Endothelial cell of umbilical vein (primary cell): ENCODE measurements at regions of chr11 and their contacts with region 1.

Region 1: GRCh38 chr11:124900464-124900863 is 2.8 kb upstream of the ROBO4 start:
- DNase-seq: peak; percentile 75
- H3K4me3 ChIP-seq: peak overlapping the region in 1 of 3 experiments; percentile 41
- H3K27ac ChIP-seq: peak overlapping the region; percentile 95
- H3K4me1 ChIP-seq: peaks cover 51% of the 10 kb centered on the region
- H3K27me3 ChIP-seq: no peaks in the 10 kb centered on the region
- CTCF ChIP-seq: no peak
- POLR2A ChIP-seq: peak; percentile 67

Region 2: DNA sequence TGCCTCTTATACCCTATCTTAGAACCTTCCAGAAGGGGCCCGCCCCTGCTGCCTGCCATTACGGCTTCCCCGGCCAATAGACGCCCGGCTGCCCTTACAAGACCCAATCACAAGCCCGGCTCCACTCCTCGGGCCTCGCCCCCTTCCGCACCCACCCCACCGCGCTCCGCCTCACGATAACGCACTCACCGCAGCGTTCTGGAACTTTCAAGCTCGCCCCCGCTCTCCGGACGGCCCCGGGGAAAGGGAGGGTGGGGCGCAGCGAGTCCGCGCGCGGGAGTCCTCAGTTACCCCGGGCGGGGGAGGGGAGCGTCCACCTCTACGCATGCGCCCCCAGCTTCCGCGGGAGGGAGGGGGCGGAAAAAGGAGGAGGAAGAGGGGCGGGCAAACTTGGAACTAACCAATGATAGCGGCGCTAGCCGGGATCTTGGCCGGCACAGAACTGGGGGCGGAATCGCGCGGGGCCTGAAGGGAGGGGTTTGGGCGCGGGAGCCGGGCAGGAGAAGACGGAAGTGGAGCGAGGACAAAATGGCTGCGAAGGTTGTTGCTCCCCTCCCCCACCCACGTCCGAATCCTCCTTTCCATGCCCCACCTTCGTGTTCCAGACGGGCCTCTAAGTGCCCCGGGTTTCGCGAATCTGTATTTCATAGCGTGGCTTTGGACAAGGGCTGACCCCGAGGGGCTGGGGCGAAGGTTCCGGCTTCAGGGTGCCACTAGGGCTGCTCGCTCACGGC is 1838.1 kb before region 1 on chr11:
- CTCF ChIA-PET with region 1: no interaction called
- POLR2A ChIA-PET with region 1: no interaction called
- dilution Hi-C with region 1: no loop called
- intact Hi-C with region 1: loop called (anchors 5 kb)
- DNase-seq: peak; percentile 100
- H3K4me3 ChIP-seq: peak overlapping the region; percentile 66 to 95 (median 91)
- H3K27ac ChIP-seq: peak overlapping the region; percentile 96
- H3K4me1 ChIP-seq: peaks cover 29% of the 10 kb centered on the region
- H3K27me3 ChIP-seq: no peaks in the 10 kb centered on the region
- CTCF ChIP-seq: no peak
- POLR2A ChIP-seq: no peak

Region 3: DNA sequence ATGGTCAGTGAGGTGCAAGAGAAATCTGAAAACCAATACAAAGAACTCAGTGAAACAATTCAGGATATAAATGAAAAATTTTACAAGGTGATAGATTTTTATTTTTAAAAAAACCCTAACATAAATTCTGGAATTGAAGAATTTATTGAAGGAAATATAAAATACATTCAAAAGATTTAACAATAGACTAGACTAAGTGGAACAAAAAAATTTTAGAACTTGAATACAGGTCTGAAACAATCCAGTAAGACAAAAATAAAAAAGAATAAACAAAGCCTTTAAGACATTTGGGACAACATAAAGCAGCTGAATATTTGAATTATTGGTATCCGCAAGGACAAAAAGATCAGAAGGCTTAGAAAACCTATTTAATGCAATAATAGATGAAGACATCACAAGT is 218.0 kb before region 1 on chr11:
- CTCF ChIA-PET with region 1: no interaction called
- POLR2A ChIA-PET with region 1: no interaction called
- dilution Hi-C with region 1: no loop called
- intact Hi-C with region 1: no loop called
- DNase-seq: no peak
- H3K4me3 ChIP-seq: no peak overlapping the region
- H3K27ac ChIP-seq: no peak overlapping the region
- H3K4me1 ChIP-seq: no peaks in the 10 kb centered on the region
- H3K27me3 ChIP-seq: no peaks in the 10 kb centered on the region
- CTCF ChIP-seq: no peak
- POLR2A ChIP-seq: no peak

Region 4: DNA sequence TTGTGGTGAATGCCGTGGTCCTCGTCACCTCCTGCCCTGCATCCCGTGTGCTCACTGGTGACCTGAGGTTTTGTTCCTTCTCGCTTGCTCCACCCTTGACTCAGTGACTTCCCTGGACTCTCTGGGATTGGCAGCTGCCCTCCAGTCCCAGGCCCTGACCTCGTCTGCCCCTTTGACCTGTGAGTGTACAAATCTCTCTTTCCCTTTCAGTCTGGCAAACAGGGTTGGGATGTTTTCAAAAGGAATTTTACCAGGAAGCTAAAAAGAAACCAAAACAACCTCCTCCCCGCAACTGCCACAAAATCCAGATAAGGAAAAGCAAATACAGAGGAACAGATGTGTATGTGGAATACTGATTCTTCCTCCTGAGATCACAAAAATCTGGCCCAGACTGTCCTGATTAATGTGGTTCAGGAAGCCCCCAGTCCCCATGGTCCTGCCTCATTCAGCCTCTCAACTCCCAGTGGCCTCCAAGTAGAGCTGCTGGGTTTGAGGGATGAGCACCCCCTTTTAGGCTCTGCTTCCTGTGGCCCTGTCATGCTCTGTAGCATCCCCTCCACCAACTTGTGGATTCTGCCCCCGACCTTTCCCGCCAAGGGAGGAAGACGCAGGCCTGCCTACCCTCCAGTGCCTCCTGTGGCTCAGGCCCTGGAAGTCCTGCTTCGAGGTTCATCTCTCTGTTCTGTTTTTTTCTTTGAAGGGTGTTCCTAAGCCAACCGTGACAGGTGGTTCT is 18.0 kb before region 1 on chr11:
- CTCF ChIA-PET with region 1: interaction called, 70 read pairs
- POLR2A ChIA-PET with region 1: interaction called, 39 read pairs
- dilution Hi-C with region 1: no loop called
- intact Hi-C with region 1: loop called (anchors 1 kb)
- DNase-seq: peak; percentile 74
- H3K4me3 ChIP-seq: no peak overlapping the region
- H3K27ac ChIP-seq: peak overlapping the region; percentile 33
- H3K4me1 ChIP-seq: peaks cover 59% of the 10 kb centered on the region
- H3K27me3 ChIP-seq: no peaks in the 10 kb centered on the region
- CTCF ChIP-seq: peak in 1 of 2 donors; percentile 24
- POLR2A ChIP-seq: peak; percentile 87

Region 5: DNA sequence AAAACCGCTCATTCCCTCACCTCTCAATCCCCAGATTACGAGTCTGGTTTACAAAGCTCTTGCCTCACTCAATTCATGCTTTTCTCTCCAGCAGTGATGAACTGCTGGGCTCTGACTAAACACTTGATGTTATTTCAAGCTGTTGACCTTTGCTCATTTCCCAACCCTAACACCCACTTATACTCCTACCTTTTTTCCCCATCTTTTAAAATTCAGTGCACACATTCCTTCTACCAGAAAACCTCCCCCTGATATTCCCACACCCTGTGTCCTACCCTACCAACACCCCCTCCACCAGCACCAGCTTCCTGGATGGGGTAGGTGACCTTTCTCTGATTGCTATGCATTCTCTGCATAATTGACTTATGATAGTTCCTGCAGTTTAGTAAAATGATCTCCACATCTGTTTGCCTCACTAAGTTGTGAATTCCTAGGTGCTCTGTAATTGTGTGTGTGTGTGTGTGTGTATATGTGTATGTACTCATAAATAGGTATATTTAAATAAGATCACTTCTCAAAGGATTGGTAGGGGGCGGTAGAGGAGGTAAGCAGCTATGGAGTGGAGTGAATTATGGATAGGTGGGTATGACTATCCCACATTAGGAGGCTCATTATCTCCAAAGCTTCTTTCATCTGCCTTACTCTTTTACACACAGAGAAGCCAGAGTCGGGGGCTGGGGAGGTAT is 34.5 kb after region 1 on chr11:
- CTCF ChIA-PET with region 1: interaction called, 19 read pairs
- POLR2A ChIA-PET with region 1: no interaction called
- dilution Hi-C with region 1: no loop called
- intact Hi-C with region 1: no loop called
- DNase-seq: peak; percentile 35
- H3K4me3 ChIP-seq: no peak overlapping the region
- H3K27ac ChIP-seq: no peak overlapping the region
- H3K4me1 ChIP-seq: peaks cover 6% of the 10 kb centered on the region
- H3K27me3 ChIP-seq: peaks cover 0 to 3% of the 10 kb centered on the region in 2 experiments
- CTCF ChIP-seq: no peak
- POLR2A ChIP-seq: no peak

Region 6: DNA sequence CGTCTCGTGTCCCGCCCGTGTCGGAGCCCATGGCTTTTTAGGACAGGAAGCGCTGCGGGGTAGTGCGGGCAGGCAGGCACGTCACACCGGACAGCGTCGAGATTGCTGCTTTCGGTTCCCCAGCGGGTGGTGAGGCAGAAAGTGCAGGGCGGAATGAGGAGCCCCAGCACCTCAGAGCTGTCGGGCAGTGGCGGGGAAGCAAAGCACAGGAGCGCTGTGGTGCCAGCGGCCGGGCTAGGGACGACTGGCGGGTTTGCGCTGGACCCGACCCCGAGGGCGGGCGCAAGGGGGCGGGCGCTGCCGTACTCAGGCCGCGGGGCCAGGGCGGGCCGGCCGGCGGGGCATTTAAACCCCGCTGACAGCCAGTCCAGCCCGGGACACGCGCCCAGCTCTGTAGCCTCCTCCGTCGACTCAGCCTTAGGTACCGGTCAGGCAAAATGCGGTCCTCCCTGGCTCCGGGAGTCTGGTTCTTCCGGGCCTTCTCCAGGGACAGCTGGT is 162.5 kb after region 1 on chr11 and contains the start of gene SLC37A2:
- CTCF ChIA-PET with region 1: no interaction called
- POLR2A ChIA-PET with region 1: no interaction called
- dilution Hi-C with region 1: no loop called
- intact Hi-C with region 1: loop called (anchors 2 kb)
- DNase-seq: peak; percentile 64
- H3K4me3 ChIP-seq: peak within 1 kb of the TSS; percentile 64 to 87 (median 74)
- H3K27ac ChIP-seq: no peak within 1 kb of the TSS
- H3K4me1 ChIP-seq: peaks cover 9% of the 10 kb centered on the region
- H3K27me3 ChIP-seq: no peaks in the 10 kb centered on the region
- CTCF ChIP-seq: peak; percentile 7 to 12
- POLR2A ChIP-seq: no peak
- total RNA-seq, gene SLC37A2: 1.1 and 1.3 TPM in 2 replicates

Region 7: DNA sequence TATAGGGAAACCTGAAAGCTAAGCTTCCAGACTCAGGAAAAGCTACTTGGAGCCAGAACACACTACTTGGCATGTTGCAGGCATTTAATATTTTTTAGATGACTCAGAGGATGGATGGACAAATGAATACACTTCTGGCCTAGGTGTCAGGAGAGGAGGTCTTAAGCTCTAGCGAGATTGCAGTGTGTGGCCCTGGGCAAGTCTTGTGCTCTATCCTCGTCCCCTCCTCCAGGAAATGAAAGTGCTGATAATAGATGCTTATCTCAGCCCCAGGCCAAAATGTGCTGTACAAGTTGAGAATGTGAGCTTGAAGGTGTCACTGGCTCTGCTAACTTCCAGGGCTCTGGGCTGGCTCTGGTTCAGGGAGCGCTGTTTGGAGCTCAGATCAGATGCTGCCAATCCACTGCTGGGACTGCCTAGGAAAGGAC is 400.3 kb after region 1 on chr11:
- CTCF ChIA-PET with region 1: no interaction called
- POLR2A ChIA-PET with region 1: no interaction called
- dilution Hi-C with region 1: no loop called
- intact Hi-C with region 1: loop called (anchors 5 kb)
- DNase-seq: peak; percentile 80
- H3K4me3 ChIP-seq: no peak overlapping the region
- H3K27ac ChIP-seq: peak overlapping the region; percentile 68
- H3K4me1 ChIP-seq: peaks cover 42% of the 10 kb centered on the region
- H3K27me3 ChIP-seq: no peaks in the 10 kb centered on the region
- CTCF ChIP-seq: no peak
- POLR2A ChIP-seq: peak; percentile 31

Region 8: GRCh38 chr11:125740617-125741016 is 840.2 kb after region 1 on chr11:
- CTCF ChIA-PET with region 1: no interaction called
- POLR2A ChIA-PET with region 1: no interaction called
- dilution Hi-C with region 1: no loop called
- intact Hi-C with region 1: no loop called
- DNase-seq: no peak
- H3K4me3 ChIP-seq: no peak overlapping the region
- H3K27ac ChIP-seq: no peak overlapping the region
- H3K4me1 ChIP-seq: no peaks in the 10 kb centered on the region
- H3K27me3 ChIP-seq: peaks cover 2 to 10% of the 10 kb centered on the region in 2 experiments
- CTCF ChIP-seq: no peak
- POLR2A ChIP-seq: no peak